CD4-positive, alpha-beta memory T cell (primary cell): ENCODE measurements at regions of chrX and their contacts with region 1.

Region 1: DNA sequence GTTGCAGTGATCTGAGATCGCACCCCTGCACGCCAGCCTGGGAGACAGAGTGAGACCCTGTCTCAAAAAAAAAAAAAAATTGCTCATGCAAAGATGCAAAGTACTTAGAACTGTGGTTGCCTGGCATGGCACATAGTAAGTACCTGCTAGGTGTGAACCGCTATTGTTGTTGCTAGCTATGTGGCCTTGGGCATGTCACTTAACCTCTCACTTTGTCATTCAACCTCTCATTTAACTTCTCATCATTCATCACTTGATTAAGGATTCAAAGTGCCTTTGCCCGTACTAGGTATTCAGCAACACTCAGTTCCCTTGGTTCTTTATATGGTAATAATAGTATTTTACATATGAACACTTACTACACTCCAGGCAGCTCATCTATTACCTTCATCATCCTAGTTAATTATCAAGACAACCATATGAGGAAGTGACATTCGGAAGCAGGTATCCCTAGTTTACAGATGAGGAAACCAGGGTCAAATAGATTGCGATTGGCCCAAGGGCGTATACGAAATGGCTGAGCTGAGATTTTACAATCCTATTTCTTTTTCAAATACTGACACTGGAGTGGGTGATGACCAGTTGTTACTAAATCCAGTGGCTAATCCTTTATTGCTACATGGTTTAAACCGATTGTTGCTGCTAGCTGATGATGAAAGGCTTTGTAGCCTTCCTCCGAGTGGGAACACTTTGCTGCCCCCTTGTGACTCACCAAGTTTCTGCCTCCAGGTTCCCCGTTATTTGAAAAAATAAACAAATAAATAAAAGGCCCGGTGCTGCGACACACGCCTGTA is 28.8 kb upstream of the SOWAHD start:
- DNase-seq: peak; percentile 67 to 73 (median 70)
- H3K4me3 ChIP-seq: no peak overlapping the region
- H3K4me3 Mint-ChIP-seq: no peak overlapping the region
- H3K27ac ChIP-seq: no peak overlapping the region
- H3K27ac Mint-ChIP-seq: peak overlapping the region in 1 of 7 donors; percentile 7
- H3K4me1 ChIP-seq: peaks cover 5% of the 10 kb centered on the region
- H3K4me1 Mint-ChIP-seq: peaks cover 6 to 7% (median 7%) of the 10 kb centered on the region in 4 donors
- H3K27me3 ChIP-seq: no peaks in the 10 kb centered on the region
- H3K27me3 Mint-ChIP-seq: no peaks in the 10 kb centered on the region

Region 2: DNA sequence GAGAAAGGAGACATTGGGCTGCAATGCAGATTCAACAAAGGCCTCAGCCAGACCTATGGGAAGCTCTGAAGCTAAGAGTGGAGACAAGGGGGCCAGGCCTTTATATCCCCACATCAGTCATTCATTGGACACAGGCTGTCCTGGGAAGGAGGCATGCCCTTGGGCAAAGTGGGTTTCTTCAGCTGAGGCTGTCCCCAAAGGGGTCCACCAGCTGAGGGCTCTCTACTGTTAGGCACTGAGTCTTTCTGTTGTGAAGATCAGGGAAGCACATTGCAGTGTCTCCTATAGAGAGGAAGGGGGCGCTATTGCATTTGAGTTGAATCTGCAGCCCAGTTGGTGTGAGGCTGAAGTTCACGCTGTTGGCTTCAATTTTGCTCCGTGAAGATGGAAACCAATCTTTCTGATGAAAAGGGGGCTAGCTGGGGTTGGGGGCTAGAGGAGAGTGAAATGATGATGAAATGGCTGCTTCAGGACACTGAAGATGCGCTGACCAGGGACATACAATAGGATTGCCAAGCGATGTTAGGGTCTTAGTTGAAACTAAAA is 213.4 kb before region 1 on chrX:
- CTCF ChIA-PET with region 1: interaction called, 38 read pairs
- POLR2A ChIA-PET with region 1: no interaction called
- intact Hi-C with region 1: loop called (anchors 1 kb)
- DNase-seq: peak; percentile 35 to 64 (median 63)
- H3K4me3 ChIP-seq: no peak overlapping the region
- H3K4me3 Mint-ChIP-seq: no peak overlapping the region
- H3K27ac ChIP-seq: no peak overlapping the region
- H3K27ac Mint-ChIP-seq: peak overlapping the region in 5 of 7 donors; percentile 5 to 58 (median 28)
- H3K4me1 ChIP-seq: no peaks in the 10 kb centered on the region
- H3K4me1 Mint-ChIP-seq: peaks cover 2 to 5% (median 4%) of the 10 kb centered on the region in 4 donors
- H3K27me3 ChIP-seq: no peaks in the 10 kb centered on the region
- H3K27me3 Mint-ChIP-seq: no peaks in the 10 kb centered on the region

Region 3: DNA sequence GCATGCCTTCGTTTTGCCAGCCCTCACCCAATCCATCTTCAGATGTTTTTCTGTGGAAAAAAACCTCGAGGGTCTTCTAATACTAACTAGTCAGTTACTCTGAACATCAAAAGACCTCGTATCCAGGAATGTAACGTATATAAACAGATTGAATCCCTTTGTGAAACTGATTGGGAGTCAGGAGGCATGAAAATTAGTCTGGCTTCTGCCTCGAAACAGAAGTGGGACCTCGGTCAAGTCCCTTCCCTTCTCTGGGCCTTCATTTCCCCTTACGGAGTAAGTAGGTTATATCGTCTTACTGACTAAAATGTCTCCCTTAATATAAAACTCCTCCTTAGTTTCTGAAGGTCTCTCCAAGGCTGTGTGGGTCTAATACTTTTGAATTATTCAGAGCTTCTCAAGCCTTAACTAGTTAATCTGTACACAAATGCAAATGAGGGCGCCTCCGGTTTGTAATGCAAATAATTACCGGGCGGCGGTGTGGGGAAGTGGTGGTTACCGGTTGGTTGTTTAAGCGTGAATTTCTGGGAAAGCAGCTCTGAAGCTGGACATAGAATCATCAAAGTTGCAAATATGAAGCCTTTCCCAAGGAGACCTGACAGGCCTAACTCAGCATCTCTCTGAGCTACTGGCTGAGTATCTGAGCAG is 112.0 kb before region 1 on chrX:
- CTCF ChIA-PET with region 1: interaction called, 27 read pairs
- POLR2A ChIA-PET with region 1: interaction called, 3 read pairs
- intact Hi-C with region 1: loop called (anchors 1 kb)
- DNase-seq: no peak
- H3K4me3 ChIP-seq: no peak overlapping the region
- H3K4me3 Mint-ChIP-seq: no peak overlapping the region
- H3K27ac ChIP-seq: no peak overlapping the region
- H3K27ac Mint-ChIP-seq: peak overlapping the region in 5 of 7 donors; percentile 15 to 55 (median 46)
- H3K4me1 ChIP-seq: no peaks in the 10 kb centered on the region
- H3K4me1 Mint-ChIP-seq: peaks cover 0 to 6% (median 0%) of the 10 kb centered on the region in 4 donors
- H3K27me3 ChIP-seq: no peaks in the 10 kb centered on the region
- H3K27me3 Mint-ChIP-seq: no peaks in the 10 kb centered on the region

Region 4: GRCh38 chrX:119669424-119670037 is 60.1 kb before region 1 on chrX:
- CTCF ChIA-PET with region 1: interaction called, 10 read pairs
- POLR2A ChIA-PET with region 1: no interaction called
- intact Hi-C with region 1: no loop called
- DNase-seq: no peak
- H3K4me3 ChIP-seq: no peak overlapping the region
- H3K4me3 Mint-ChIP-seq: no peak overlapping the region
- H3K27ac ChIP-seq: no peak overlapping the region
- H3K27ac Mint-ChIP-seq: peak overlapping the region in 5 of 7 donors; percentile 2 to 57 (median 35)
- H3K4me1 ChIP-seq: peaks cover 32% of the 10 kb centered on the region
- H3K4me1 Mint-ChIP-seq: peaks cover 14 to 50% (median 22%) of the 10 kb centered on the region in 4 donors
- H3K27me3 ChIP-seq: no peaks in the 10 kb centered on the region
- H3K27me3 Mint-ChIP-seq: no peaks in the 10 kb centered on the region

Region 5: GRCh38 chrX:119698845-119699244 is 30.8 kb before region 1 on chrX:
- CTCF ChIA-PET with region 1: interaction called, 30 read pairs
- POLR2A ChIA-PET with region 1: interaction called, 9 read pairs
- intact Hi-C with region 1: loop called (anchors 2 kb)
- DNase-seq: no peak
- H3K4me3 ChIP-seq: no peak overlapping the region
- H3K4me3 Mint-ChIP-seq: no peak overlapping the region
- H3K27ac ChIP-seq: no peak overlapping the region
- H3K27ac Mint-ChIP-seq: peak overlapping the region in 2 of 7 donors; percentile 20 to 43
- H3K4me1 ChIP-seq: peaks cover 2% of the 10 kb centered on the region
- H3K4me1 Mint-ChIP-seq: peaks cover 6 to 11% (median 7%) of the 10 kb centered on the region in 4 donors
- H3K27me3 ChIP-seq: no peaks in the 10 kb centered on the region
- H3K27me3 Mint-ChIP-seq: peaks cover 0 to 2% of the 10 kb centered on the region in 2 donors

Region 6: DNA sequence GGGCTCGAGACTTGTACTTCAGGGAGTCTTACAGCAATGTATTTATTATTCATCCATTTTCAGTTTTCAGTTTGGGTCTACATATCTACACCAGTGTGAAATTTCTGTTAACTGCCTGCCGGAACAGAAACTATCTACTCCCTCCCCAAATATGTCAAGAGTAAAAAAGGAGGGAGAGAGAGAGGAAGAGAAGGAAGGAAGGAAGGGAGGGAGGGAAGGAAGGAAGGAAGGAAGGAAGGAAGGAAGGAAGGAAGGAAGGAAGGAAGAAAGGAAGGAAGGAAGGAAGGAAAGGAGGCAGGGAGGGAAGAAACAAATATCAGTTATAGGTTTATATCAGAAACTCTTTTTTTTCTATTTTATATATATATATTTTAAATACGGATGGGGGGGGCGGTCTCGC is 49.2 kb after region 1 on chrX:
- CTCF ChIA-PET with region 1: interaction called, 16 read pairs
- POLR2A ChIA-PET with region 1: interaction called, 4 read pairs
- intact Hi-C with region 1: no loop called
- DNase-seq: no peak
- H3K4me3 ChIP-seq: no peak overlapping the region
- H3K4me3 Mint-ChIP-seq: no peak overlapping the region
- H3K27ac ChIP-seq: no peak overlapping the region
- H3K27ac Mint-ChIP-seq: peak overlapping the region in 3 of 7 donors; percentile 19 to 81 (median 79)
- H3K4me1 ChIP-seq: no peaks in the 10 kb centered on the region
- H3K4me1 Mint-ChIP-seq: peaks cover 0 to 13% (median 0%) of the 10 kb centered on the region in 4 donors
- H3K27me3 ChIP-seq: no peaks in the 10 kb centered on the region
- H3K27me3 Mint-ChIP-seq: no peaks in the 10 kb centered on the region